ENCODE measurements at regions of chr1 and their contacts with region 1.

Region 1: DNA sequence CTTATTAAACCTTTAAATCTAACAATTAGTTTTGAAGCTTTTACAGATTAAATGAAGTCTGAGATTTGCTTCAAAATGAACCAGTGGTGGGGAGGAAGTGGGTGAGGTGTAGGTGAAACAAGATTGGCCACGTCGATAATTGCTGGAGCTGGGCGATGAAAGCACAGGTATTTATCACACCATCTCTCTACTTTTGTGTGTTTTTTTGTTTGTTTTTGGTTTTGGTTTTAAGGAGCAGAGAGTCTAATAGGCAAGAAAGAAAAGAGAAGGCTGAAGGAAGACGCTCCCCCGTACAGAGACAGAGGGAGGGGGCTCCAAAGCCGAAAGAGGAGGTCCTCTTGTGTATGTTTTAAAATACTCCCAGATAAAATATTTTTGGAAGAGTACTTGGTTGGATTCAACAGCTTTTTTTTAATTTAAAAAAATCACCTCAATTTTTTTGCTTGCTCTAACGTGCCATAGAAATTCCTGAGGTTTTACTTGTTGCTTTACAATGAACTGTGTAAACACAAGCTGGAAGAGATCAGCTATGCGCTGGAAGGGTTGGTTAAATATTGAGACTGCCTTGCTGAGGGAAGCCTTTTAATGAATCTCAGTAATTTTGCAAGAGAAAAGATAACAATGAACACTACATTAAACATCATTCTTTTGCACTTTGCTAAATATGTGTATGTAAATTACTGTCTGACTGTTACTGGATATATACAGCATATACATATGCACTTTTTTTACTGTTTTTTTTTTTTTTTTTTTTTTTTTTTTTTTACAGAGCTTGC is 6.7 kb upstream of the LGALS8 start:
- DNase-seq: peak; percentile 93
- ATAC-seq: peak; percentile 87
- H3K4me3 ChIP-seq: peak overlapping the region; percentile 25 to 50 (median 30); a peak in 5 of 6 replicates
- H3K27ac ChIP-seq: peak overlapping the region; percentile 81
- H3K4me1 ChIP-seq: peaks cover 97% of the 10 kb centered on the region
- H3K27me3 ChIP-seq: no peaks in the 10 kb centered on the region
- CTCF ChIP-seq: no peak
- EP300 ChIP-seq: peak in 1 of 2 experiments; percentile 65; a peak in 2 of 4 replicates
- POLR2A ChIP-seq: no peak
- RAD21 ChIP-seq: no peak

Region 2: DNA sequence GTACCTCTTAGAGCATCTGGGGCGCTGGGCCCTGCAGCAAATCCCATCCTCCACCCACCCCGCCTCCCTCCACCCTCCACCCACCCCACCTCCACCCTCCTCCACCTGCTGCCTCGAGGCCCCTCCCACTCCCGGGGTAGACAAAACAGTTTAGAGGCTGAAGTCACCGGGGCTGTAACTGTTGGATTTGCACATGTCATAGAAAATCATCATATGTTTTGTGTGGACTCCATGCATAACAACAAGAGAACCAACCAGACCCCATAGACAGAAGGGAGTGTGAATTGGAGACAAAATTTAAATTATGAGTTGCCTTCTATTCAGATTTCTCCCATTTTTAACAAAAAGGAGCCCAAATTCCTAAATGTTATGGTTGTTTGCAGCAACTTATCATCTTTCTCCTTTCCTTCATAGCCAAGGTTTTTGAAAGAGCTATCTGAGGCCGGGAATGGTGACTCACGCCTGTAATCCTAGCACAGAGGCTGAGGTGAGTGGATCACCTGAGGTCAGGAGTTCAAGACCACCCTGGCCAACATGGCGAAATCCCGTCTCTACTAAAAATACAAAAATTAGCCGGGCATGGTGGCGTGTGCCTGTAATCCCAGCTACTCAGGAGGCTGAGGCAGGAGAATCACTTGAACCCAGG is 21.5 kb before region 1 on chr1:
- CTCF ChIA-PET with region 1: no interaction called
- POLR2A ChIA-PET with region 1: interaction called, 40 read pairs
- in situ Hi-C with region 1: no loop called
- intact Hi-C with region 1: loop called (anchors 1 kb)
- DNase-seq: peak; percentile 53
- ATAC-seq: peak; percentile 12; the same call in 2 of the 3 replicates
- H3K4me3 ChIP-seq: 0 out of 6 replicates have a peak overlapping the region, but pooled peaks of 1 of the 3 experiments have one; percentile 45
- H3K27ac ChIP-seq: peak overlapping the region; percentile 88
- H3K4me1 ChIP-seq: peaks cover 76% of the 10 kb centered on the region
- H3K27me3 ChIP-seq: no peaks in the 10 kb centered on the region
- CTCF ChIP-seq: no peak
- EP300 ChIP-seq: no peak
- POLR2A ChIP-seq: no peak
- RAD21 ChIP-seq: no peak

Region 3: GRCh38 chr1:236502885-236503639 is 14.1 kb before region 1 on chr1:
- CTCF ChIA-PET with region 1: no interaction called
- POLR2A ChIA-PET with region 1: interaction called, 15 read pairs
- in situ Hi-C with region 1: no loop called
- intact Hi-C with region 1: loop called (anchors 1 kb)
- DNase-seq: peak; percentile 91
- ATAC-seq: peak; percentile 94
- H3K4me3 ChIP-seq: peak overlapping the region in 1 of 3 experiments; percentile 25; a peak in 1 of 6 replicates
- H3K27ac ChIP-seq: peak overlapping the region; percentile 89
- H3K4me1 ChIP-seq: peaks cover 78% of the 10 kb centered on the region
- H3K27me3 ChIP-seq: no peaks in the 10 kb centered on the region
- CTCF ChIP-seq: no peak
- EP300 ChIP-seq: peak in 1 of 2 experiments; percentile 72; a peak in 1 of 4 replicates
- POLR2A ChIP-seq: peak; percentile 53 to 56
- RAD21 ChIP-seq: no peak

Measured in HepG2 (cell line).